Aorta (tissue), 5 donors: ENCODE measurements at regions of chr6 and their contacts with region 1.

Region 1: GRCh38 chr6:157045831-157046454 is 268.8 kb downstream of the ARID1B start:
- DNase-seq: no peak
- ATAC-seq: no peak
- H3K4me3 ChIP-seq: no peak overlapping the region
- H3K27ac ChIP-seq: no peak overlapping the region
- H3K4me1 ChIP-seq: peaks cover 2 to 13% of the 10 kb centered on the region in 2 donors
- H3K27me3 ChIP-seq: no peaks in the 10 kb centered on the region

Region 2: DNA sequence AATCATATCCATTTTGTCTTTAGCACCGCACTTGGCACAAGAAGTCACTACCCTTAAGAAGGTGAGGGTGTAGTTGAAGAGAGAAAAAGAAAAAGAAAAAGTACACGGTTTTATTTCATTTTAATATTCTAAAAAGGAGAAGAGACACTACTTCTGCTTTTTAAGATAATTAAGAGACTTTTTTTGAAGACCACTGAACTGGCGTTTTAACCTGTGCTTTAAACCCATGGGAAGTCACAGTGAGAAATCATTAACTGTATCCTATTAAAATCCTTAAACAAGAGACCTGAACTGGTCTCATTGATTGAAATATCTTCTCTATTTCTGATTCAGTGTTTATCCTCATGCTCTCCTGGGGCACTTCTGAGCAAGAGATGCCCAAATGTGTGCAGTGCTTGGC is 33.8 kb after region 1 on chr6:
- intact Hi-C with region 1: loop called in 1 of 2 experiments (anchors 5 kb)
- DNase-seq: no peak
- ATAC-seq: no peak
- H3K4me3 ChIP-seq: no peak overlapping the region
- H3K27ac ChIP-seq: no peak overlapping the region
- H3K4me1 ChIP-seq: peaks cover under 1 to 5% of the 10 kb centered on the region in 2 donors
- H3K27me3 ChIP-seq: no peaks in the 10 kb centered on the region